Calu3 (cell line): ENCODE measurements at regions of chr1 and their contacts with region 1.

Region 1: DNA sequence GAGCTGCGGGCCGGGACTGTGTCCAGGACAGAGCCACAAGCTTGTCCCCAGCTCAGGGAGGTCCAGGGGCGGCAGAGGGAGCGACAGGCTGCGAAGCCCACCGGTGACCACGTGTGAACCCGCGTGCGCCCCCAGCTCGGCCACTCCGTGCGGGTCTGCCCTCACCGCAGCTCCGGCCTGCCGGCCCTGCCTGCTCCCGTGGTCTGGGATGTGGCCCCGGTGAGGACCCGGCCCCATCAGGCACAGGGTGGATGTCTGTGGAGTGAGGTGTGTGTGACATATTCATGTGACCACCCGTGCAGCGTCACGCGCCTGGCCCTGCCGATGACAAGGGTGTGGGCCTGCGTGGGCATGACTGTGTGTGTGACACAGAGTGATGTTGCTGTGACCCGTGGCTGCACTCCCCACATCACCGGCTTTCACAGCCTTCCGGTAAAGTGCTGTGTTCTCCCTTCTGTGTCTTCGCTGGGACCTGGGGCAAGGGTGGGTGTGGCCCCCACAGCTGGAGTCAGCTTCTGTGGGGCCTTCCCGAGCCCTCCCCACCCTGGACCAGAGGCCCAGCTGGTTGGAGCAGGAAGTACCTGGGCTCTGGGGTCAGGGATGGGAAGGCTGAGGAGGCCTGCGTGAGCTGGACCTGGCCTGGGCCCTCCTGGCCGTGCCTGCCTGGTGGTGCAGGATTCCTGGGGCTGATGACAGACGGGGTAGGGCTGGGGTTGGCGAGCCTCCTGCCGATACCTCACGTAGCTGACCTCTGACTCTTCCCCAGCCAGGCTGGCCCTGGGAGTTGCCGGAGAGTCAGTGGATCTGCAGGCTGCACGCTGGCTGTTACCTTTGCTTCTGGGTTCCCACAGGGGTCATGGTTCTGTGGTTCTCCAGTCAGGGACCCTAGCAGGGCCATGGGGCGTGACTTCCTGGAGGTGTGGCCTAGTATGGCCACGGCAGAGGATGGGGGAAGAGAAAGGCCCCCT is 4.1 kb downstream of the RNF223 start:
- DNase-seq: peak; percentile 61
- H3K4me3 Mint-ChIP-seq: peak overlapping the region; percentile 85
- H3K27ac Mint-ChIP-seq: peak overlapping the region; percentile 86
- H3K4me1 Mint-ChIP-seq: peaks cover 7% of the 10 kb centered on the region
- H3K27me3 Mint-ChIP-seq: no peaks in the 10 kb centered on the region
- CTCF ChIP-seq: no peak

Region 2: DNA sequence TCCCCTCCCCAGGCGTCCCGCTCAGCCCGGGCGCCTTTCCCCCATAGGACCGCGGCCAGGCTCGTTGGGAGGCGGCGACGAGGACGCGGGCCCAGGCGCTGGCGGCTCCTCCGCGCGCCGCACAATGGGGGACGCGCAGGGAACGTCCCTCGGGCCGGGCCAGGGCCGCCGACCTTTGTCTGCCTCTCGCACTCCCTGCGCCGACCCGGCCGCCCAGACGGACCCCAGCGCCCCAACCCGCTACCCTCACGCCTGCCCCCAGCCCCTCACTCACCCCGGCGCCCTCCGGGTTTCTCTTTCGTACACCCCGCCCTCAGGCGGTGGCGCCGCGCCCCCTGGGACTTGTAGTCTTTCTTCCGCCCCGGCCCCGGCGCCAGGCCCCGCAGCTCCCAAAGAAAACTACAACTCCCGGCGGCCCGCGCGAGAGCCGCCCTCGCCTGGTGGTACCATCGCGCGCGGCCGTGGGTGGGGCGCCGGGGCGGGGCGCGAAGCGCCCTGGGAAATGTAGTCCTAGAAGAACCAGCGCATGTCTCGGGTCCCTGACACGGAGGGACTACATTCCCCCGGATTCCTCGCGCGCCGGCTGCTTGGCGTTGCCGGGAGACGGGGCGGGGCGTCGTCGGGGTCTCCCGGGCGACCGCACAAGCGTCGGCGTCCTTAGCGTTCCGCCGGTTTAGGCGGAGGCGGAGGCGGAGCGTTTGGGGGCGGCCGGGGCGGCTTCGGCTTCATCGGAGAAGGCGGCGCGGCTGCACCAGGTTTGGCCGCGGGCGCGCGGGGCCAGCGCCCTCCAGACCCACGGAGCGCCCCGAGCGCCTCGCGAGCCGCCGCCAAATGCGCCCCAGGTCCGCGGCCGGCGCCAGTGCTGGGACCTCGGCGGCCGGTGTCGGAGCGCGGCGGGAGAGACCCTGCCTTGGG is 46.0 kb after region 1 on chr1 and contains the start of gene C1orf159:
- CTCF ChIA-PET with region 1: interaction called, 3 read pairs
- intact Hi-C with region 1: loop called (anchors 5 kb)
- DNase-seq: peak; percentile 96
- H3K4me3 Mint-ChIP-seq: peak within 1 kb of the TSS; percentile 77
- H3K27ac Mint-ChIP-seq: no peak within 1 kb of the TSS
- H3K4me1 Mint-ChIP-seq: no peaks in the 10 kb centered on the region
- H3K27me3 Mint-ChIP-seq: no peaks in the 10 kb centered on the region
- CTCF ChIP-seq: no peak
- total RNA-seq, gene C1orf159: 32.4 and 34.7 TPM in 2 replicates